Activated naive CD4-positive, alpha-beta T cell treated with anti-CD3 and anti-CD28 coated beads for 36 hours (primary cell): ENCODE measurements at regions of chr4 and their contacts with region 1.

Region 1: DNA sequence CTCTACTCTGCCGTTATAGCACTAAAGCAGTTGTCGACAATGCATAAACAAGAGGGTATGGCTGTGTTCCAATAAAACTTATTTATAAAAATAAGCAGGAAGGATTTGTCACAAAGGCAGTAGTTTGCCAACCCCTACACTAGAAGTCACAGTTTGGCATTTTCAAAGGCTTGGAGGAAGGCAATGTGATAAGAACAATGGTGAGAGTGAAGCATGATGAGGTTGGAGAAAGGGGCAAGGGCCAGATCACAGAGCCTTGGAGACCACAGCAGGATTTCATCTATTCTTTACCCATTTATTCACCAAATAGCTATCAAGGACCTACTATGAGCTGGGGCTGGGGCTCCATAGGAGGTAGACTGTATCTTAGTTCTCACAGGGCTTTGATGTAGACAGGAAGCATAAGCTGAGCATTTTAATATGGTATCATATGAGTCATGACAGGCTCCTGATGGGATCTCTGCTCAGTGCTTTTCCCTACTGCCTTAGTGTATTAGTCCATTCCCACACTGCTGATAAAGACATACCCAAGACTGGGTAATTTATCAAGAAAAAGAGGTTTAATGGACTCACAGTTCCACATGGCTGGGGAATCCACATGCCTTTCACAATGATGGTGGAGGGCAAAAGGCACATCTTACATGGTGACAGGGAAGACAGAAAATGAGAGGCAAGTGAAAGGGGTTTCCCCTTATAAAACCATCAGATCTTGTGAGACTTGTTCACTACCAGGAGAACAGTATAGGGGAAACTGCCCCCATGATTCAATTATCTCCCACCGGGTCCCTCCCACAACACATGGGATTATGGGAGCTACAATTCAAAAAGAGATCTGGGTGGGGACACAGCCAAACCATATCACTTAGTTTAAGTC is 58.9 kb downstream of the PPM1K start:
- DNase-seq: peak; percentile 37
- H3K4me3 Mint-ChIP-seq: no peak overlapping the region
- H3K27ac Mint-ChIP-seq: peak overlapping the region; percentile 37
- H3K4me1 Mint-ChIP-seq: peaks cover 16% of the 10 kb centered on the region
- H3K27me3 Mint-ChIP-seq: no peaks in the 10 kb centered on the region

Region 2: GRCh38 chr4:88320780-88321373 is 95.4 kb after region 1 on chr4:
- CTCF ChIA-PET with region 1: no interaction called
- intact Hi-C with region 1: loop called (anchors 5 kb)
- DNase-seq: peak; percentile 28
- H3K4me3 Mint-ChIP-seq: peak overlapping the region; percentile 49
- H3K27ac Mint-ChIP-seq: peak overlapping the region; percentile 59
- H3K4me1 Mint-ChIP-seq: peaks cover 15% of the 10 kb centered on the region
- H3K27me3 Mint-ChIP-seq: no peaks in the 10 kb centered on the region